ENCODE measurements at regions of chr11 and their contacts with region 1.

Region 1: DNA sequence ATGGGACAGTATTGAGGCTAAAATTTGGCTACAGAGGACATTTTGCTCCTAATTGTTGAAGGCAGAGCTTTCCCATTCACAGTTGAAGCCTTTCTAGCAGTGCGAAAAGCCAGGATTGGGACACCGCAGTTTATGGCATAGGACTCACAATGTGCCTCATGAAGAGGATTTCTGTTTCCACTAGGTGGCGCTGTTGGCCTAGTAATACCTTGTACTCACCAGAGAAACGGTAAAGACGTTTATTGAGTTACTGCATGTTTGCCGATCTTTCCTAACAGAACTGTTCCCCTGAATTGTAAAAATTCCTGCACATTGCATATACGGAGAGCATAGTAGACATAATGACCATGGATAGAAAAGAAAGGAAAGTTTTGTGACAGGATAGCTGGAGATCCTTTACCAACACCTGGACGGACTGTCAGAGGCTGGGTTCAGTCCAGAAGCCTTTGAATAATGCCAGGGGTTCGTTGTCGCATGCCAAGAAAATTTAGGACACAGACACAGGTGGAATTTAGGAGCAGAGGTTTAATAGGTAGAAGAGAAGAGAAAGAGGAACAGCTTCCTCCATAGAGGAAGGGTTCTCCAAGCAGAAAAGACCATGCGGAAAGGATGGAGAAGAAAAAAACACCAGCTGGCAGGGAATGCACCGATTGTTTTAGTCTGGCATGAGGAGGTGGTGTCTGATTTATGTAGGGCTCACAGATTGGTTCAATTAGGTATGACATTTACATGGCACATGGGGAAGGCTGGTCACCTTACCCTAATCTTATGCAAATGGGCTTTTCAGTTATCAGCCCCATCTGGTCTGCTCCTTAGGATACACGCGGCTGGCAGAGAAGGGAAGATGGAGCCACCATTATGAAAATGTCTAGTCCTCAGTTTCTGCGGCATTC is 10.8 kb upstream of the OR51D1 start:
- DNase-seq: no peak

Region 2: DNA sequence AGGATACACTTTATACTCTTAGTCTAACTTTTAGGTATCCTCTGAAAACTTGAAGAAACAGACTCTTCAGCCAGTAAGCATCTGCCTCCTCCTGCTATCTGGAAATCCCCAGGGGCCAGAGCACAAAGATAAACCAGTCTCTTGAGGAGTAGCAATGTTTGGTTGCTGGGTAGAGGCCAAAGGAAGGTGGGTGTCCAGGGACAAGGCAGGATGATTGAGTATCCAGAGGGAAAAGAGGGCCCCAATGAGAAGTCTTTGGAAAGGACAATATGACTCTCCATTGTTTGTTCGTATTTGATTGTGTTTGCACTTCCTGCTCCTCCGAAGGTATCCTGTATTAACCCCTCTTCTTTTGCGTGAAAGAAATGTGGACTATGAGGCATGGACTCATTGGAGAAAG is 37.4 kb before region 1 on chr11:
- intact Hi-C with region 1: no loop called
- DNase-seq: no peak

Region 3: GRCh38 chr11:5004424-5005274 is 378.2 kb after region 1 on chr11:
- intact Hi-C with region 1: loop called (anchors 5 kb)
- DNase-seq: no peak